ENCODE measurements at regions of chr1 and their contacts with region 1.

Region 1: GRCh38 chr1:205812878-205813754 is at the start of gene SLC41A1:
- DNase-seq: peak; percentile 95
- ATAC-seq: peak; percentile 96
- H3K4me3 ChIP-seq: peak within 1 kb of the TSS; percentile 81 to 84
- H3K27ac ChIP-seq: peak within 1 kb of the TSS; percentile 68 to 77
- H3K4me1 ChIP-seq: peaks cover 0 to 5% of the 10 kb centered on the region in 2 donors
- H3K27me3 ChIP-seq: no peaks in the 10 kb centered on the region
- total RNA-seq, gene SLC41A1: 36.2 to 40.3 TPM

Region 2: DNA sequence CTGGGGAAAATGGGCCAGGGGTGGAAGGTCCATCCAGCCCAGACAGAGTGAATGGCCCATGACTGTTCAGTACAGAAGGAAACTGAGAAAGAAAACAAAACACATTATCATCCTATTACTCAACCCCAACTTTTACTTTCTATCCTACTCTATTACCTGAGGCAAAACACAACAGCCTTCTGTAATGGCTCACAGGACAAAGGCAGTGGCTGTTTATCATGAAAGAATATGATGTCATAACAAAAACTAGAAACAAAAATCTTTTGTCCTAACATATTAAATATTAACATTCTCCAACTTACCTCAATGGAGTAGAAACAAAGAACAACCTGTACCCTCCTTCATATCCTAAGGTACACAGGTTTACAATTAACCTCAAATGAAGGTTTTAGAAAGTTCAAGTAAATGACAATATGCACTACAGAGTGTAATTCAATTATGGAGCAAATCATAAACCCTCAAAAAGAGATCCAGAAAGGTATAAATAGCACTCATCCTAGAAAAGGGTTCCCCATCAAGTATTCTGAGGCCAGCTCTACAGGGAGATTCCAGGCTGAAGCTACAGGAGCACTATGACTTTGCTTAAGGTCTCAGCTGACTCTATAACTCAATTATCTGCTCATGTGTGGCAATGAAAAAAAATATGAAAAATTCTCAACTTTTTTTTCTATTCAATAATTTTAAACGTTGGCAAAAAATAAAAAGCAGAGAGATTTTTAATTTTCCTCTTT is 196.4 kb before region 1 on chr1:
- intact Hi-C with region 1: no loop called
- DNase-seq: no peak
- ATAC-seq: no peak
- H3K4me3 ChIP-seq: no peak overlapping the region
- H3K27ac ChIP-seq: no peak overlapping the region
- H3K4me1 ChIP-seq: no peaks in the 10 kb centered on the region
- H3K27me3 ChIP-seq: no peaks in the 10 kb centered on the region

Region 3: DNA sequence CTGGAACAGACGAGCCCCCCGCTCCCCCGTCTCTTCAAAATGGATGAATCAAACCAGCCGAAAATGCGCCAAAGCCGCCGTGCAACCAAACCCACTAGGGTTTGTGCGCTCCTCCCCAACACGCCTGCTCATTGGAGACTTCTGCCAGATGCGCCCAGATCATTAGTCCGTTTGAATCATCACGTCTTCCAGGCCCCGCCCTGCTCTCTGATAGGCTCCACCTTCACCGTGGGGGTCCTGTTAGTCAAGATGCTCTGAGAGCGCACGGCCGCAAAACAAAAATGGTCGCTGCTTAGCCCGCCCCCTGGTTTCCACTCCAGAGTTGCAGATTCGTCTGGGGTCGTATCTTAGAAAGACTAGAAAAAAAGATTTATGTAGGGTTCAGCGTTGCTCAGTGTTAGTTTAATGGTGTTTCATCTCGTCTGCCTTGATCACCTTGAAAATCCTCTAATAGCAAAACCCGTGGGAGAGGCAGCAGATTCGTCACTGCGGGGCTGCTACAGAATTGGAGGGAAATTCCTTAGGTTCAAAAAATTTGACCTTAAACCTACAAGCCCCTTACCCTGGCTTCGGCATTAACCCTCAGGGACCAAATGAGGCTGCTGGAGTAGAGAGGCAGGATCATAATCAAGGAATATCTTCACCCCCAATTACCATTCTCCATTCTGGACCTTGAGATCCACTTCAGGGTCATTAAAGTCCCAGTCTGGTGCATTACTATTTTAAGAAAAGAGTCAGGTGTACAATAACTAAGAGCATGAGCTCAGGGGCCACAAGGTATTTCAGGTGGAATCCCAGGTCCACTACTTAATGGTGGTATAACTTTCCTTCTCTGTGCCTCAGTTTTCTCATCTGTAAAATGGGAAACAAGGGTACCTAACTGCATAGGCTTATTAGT is 62.7 kb before region 1 on chr1 and contains the start of gene NUCKS1:
- intact Hi-C with region 1: loop called in 1 of 2 experiments (anchors 5 kb)
- DNase-seq: peak; percentile 98 to 99
- ATAC-seq: peak; percentile 94
- H3K4me3 ChIP-seq: peak within 1 kb of the TSS; percentile 96 to 98
- H3K27ac ChIP-seq: peak within 1 kb of the TSS; percentile 74 to 81
- H3K4me1 ChIP-seq: peaks cover 0 to 4% of the 10 kb centered on the region in 2 donors
- H3K27me3 ChIP-seq: no peaks in the 10 kb centered on the region
- total RNA-seq, gene NUCKS1: 145 to 158 TPM

Region 4: GRCh38 chr1:205849619-205850355 is 36.7 kb after region 1 on chr1 and contains the start of gene PM20D1:
- intact Hi-C with region 1: loop called in 1 of 2 experiments (anchors 1 kb)
- DNase-seq: peak; percentile 78 to 93
- ATAC-seq: peak; percentile 88
- H3K4me3 ChIP-seq: no peak within 1 kb of the TSS
- H3K27ac ChIP-seq: no peak within 1 kb of the TSS
- H3K4me1 ChIP-seq: no peaks in the 10 kb centered on the region
- H3K27me3 ChIP-seq: no peaks in the 10 kb centered on the region
- total RNA-seq, gene PM20D1: 0.19 to 1.1 TPM

Region 5: GRCh38 chr1:205913451-205914155 is 100.5 kb after region 1 on chr1:
- intact Hi-C with region 1: loop called (anchors 5 kb)
- DNase-seq: peak; percentile 85 to 86
- ATAC-seq: peak; percentile 69
- H3K4me3 ChIP-seq: no peak overlapping the region
- H3K27ac ChIP-seq: peak overlapping the region; percentile 18 to 92
- H3K4me1 ChIP-seq: peaks cover 0 to 9% of the 10 kb centered on the region in 2 donors
- H3K27me3 ChIP-seq: no peaks in the 10 kb centered on the region

Region 6: GRCh38 chr1:205919026-205919746 is 106.1 kb after region 1 on chr1:
- intact Hi-C with region 1: loop called (anchors 5 kb)
- DNase-seq: peak; percentile 89 to 90
- ATAC-seq: peak; percentile 84
- H3K4me3 ChIP-seq: no peak overlapping the region
- H3K27ac ChIP-seq: peak overlapping the region; percentile 14 to 35
- H3K4me1 ChIP-seq: peaks cover 3 to 9% of the 10 kb centered on the region in 2 donors
- H3K27me3 ChIP-seq: no peaks in the 10 kb centered on the region

Region 7: DNA sequence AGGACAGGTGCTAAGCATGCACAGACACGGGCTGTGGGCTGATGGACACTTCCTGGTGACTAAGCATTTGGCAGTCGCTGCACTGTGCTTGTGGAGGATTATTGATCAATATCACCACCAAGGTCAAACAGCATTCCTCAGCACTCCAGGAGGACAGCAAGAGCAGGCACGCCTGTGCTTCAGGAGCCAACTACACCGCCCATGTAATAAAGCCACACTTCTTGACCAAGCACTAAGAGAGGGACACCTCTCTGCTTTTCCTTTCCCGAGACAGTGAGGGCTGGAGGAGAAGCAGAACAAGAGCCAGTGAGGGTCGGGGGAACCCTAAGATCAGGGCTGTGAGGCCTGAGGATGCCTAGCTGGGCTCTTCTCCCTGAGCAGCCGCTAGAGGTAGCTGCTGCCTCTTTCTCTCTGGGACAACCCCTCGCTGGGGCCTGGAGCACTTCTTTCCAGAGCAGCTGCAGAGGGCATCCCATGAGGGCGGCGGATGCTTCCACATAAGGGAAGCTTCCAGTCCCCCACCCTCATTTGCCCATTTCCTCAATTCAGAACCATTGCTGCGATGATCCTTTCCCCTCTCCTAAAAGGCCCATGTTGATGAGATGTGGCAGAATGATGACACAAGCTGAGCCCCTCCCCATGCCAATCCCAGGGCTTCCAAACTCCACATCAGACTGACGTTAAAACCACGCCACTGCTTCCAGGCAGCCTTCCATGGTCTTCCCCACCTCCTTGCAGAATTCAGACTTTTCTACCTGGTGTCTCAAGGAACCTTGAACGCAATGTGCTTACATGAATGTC is 171.0 kb after region 1 on chr1:
- intact Hi-C with region 1: loop called in 1 of 2 experiments (anchors 5 kb)
- DNase-seq: peak; percentile 81 to 83
- ATAC-seq: peak; percentile 60
- H3K4me3 ChIP-seq: no peak overlapping the region
- H3K27ac ChIP-seq: no peak overlapping the region
- H3K4me1 ChIP-seq: no peaks in the 10 kb centered on the region
- H3K27me3 ChIP-seq: no peaks in the 10 kb centered on the region

Measured in aorta (tissue), 5 donors.